Sigmoid colon (tissue), 7 donors: ENCODE measurements at regions of chr12 and their contacts with region 1.

Region 1: GRCh38 chr12:95998611-95999286 is 2.6 kb upstream of the HAL start:
- DNase-seq: no peak
- H3K4me3 ChIP-seq: no peak overlapping the region
- H3K27ac ChIP-seq: no peak overlapping the region
- H3K4me1 ChIP-seq: no peaks in the 10 kb centered on the region
- H3K27me3 ChIP-seq: no peaks in the 10 kb centered on the region
- CTCF ChIP-seq: peak in 3 of 4 experiments; percentile 65 to 70 (median 68)
- EP300 ChIP-seq: no peak
- POLR2A ChIP-seq: no peak

Region 2: DNA sequence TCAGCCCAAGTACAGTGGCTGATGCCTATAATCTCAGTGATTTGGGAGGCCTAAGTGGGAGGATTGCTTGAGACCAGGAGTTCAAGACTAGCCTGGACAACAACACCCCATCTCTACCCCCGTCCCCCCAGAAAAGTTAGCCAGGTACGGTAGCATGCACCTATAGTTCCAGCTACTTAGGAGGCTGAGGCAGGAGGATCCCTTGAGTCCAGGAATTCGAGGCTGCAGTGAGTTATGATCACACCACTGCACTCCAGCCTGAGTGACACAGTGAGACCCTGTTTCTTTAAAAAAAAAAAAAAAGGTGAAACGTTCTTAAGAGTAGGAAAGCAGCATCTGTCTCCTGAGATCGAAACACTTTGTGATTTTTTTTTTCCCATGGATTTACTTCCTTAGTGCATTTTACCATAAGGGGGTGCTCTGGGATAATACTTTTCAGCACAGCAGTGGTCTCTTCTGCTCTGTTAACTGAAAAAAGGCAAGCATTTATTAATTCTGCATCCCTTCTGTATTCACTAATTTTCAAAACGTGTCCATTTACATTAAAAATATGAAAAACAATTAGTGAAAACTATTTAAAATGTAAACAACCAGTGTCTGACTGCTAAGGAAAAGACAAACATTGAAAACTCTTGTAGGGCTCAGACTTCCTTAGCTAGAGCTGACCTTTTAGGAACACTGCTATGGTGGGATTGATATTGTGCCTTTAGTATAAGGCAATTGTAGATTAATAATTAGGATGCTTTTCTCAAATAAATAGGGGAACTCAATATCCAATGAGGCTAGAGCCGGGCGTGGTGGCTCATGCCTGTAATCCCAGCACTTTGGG is 416.3 kb before region 1 on chr12:
- intact Hi-C with region 1: loop called (anchors 5 kb)
- DNase-seq: no peak
- H3K4me3 ChIP-seq: no peak overlapping the region
- H3K27ac ChIP-seq: no peak overlapping the region
- H3K4me1 ChIP-seq: peaks cover 0 to 5% (median 2%) of the 10 kb centered on the region in 4 donors
- H3K27me3 ChIP-seq: no peaks in the 10 kb centered on the region
- CTCF ChIP-seq: peak in 2 of 4 experiments; percentile 18 to 39
- EP300 ChIP-seq: no peak
- POLR2A ChIP-seq: no peak

Region 3: GRCh38 chr12:95918194-95918993 is 80.4 kb before region 1 on chr12:
- intact Hi-C with region 1: loop called (anchors 2 kb)
- DNase-seq: no peak
- H3K4me3 ChIP-seq: no peak overlapping the region
- H3K27ac ChIP-seq: no peak overlapping the region
- H3K4me1 ChIP-seq: no peaks in the 10 kb centered on the region
- H3K27me3 ChIP-seq: no peaks in the 10 kb centered on the region
- CTCF ChIP-seq: peak; percentile 58 to 73 (median 66)
- EP300 ChIP-seq: no peak
- POLR2A ChIP-seq: no peak